Activated naive CD4-positive, alpha-beta T cell treated with anti-CD3 and anti-CD28 coated beads for 36 hours (primary cell): ENCODE measurements at regions of chr2 and their contacts with region 1.

Region 1: DNA sequence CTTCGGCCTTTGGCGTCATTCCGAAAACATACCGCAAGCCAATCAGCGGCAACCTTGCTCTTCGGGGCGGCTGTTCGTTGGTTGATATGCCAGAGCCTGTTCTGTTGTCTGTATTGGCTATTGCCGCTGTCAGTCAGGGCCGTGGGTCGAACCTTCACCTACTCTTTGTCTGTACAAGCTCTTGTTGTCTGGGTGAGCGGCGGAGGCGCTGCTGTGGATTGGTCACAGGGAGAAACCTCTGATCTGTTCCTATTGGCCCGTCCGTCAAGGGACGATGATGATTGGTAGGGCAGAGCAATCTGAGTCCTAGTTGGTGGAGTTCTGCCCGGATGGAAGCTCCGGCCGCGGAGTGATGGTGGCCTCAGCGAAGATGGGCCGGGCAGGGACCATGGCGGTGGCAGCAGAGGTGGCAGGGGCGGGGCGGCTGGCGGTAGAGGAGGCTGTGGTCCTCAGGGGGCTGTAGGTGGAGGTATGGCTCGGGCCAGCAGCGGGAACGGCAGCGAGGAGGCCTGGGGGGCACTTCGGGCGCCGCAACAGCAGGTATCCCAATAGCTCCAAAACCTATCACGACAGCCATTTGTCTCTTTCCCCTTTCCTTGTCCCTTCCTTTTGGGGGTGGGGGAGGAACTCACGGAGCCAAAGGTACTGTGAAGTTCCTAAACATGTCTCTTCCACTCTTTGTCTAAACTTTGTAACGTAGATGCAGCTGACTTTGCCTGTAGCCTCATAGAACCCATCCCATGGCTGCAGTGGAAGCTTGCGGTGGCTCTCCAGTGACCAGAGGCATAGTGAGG is at the start of gene WBP1:
- DNase-seq: peak; percentile 100
- H3K4me3 Mint-ChIP-seq: peak within 1 kb of the TSS; percentile 92
- H3K27ac Mint-ChIP-seq: peak within 1 kb of the TSS; percentile 99
- H3K4me1 Mint-ChIP-seq: peaks cover 43% of the 10 kb centered on the region
- H3K27me3 Mint-ChIP-seq: no peaks in the 10 kb centered on the region
- total RNA-seq, gene WBP1: 39.4 to 40.0 TPM

Region 2: DNA sequence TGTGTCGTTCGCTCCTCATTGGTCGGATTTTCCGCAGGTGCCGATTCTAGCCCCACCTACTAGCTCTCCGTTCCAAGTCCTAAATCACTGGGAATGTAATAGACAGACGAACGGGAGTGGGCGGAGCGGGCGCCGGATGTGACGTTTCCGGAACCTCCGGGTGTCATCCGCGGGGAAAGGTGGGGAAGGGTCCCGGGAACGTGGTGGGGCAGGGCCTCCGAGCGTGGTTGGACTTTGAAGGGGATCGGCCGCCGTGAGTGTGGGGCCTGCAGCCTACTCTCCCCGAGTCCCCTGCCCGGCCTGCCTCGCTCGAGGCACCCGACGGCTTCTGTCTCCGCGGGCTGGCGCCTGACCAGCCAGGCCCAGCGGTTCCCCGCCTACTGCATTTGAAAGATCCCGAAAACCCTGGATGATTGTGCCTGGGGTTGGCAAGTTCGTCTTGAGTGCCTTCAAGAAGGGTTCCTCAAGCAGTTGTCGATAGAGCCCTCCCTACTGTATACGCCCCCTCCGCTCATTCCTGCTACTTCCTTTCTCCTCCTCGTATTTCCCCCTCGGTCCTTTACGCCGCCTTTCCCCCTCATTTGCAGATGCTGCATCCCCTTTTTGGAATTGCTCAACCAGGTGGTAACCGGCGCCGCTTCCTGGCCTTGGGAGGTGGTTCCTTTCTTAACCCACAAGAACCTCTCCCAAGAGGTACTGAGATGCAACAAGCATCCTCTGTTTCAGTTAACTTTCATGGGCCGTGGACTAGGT is 629.3 kb before region 1 on chr2 and contains the start of gene STAMBP:
- CTCF ChIA-PET with region 1: no interaction called
- intact Hi-C with region 1: loop called (anchors 1 kb)
- DNase-seq: peak; percentile 96
- H3K4me3 Mint-ChIP-seq: peak within 1 kb of the TSS; percentile 94
- H3K27ac Mint-ChIP-seq: peak within 1 kb of the TSS; percentile 94
- H3K4me1 Mint-ChIP-seq: peaks cover 43% of the 10 kb centered on the region
- H3K27me3 Mint-ChIP-seq: no peaks in the 10 kb centered on the region
- total RNA-seq, gene STAMBP: 80.5 to 80.7 TPM

Region 3: DNA sequence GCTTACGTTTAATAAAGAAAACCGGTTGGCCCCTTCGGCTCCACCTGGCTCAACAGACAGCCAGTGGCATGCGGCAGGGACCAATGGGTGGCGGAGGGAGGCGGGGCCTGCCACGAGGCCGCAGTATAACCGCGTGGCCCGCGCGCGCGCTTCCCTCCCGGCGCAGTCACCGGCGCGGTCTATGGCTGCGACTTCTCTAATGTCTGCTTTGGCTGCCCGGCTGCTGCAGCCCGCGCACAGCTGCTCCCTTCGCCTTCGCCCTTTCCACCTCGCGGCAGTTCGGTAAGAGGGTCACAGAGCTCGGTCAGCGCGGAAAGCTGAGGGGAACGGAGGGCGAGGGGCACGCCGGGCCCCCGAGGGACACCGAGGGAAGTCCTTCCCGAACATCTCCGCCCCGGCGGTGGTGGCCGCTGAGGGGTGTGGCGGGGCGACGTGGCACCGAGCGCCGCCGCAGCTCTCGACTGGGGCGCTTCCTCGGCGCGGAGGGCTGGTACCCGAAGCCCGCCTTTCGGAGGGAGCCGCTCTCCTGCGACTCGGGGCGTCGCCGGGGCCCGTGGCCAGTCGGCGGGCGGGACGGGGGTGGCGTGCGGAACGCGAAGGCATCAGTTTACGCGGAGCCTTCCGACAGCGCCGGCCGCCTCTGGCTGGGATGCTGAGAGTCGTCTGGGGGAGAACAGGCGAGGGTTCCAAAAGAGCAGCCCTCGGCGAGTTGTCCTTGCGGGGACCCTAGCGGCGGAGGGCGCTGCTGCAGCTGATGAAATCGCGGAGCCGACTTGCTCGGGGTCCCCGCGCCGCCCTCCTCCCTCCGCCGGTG is 259.7 kb before region 1 on chr2 and contains the start of gene MTHFD2:
- CTCF ChIA-PET with region 1: no interaction called
- intact Hi-C with region 1: loop called (anchors 2 kb)
- DNase-seq: peak; percentile 95
- H3K4me3 Mint-ChIP-seq: peak within 1 kb of the TSS; percentile 97
- H3K27ac Mint-ChIP-seq: peak within 1 kb of the TSS; percentile 99
- H3K4me1 Mint-ChIP-seq: peaks cover 36% of the 10 kb centered on the region
- H3K27me3 Mint-ChIP-seq: no peaks in the 10 kb centered on the region
- total RNA-seq, gene MTHFD2: 683 to 692 TPM

Region 4: DNA sequence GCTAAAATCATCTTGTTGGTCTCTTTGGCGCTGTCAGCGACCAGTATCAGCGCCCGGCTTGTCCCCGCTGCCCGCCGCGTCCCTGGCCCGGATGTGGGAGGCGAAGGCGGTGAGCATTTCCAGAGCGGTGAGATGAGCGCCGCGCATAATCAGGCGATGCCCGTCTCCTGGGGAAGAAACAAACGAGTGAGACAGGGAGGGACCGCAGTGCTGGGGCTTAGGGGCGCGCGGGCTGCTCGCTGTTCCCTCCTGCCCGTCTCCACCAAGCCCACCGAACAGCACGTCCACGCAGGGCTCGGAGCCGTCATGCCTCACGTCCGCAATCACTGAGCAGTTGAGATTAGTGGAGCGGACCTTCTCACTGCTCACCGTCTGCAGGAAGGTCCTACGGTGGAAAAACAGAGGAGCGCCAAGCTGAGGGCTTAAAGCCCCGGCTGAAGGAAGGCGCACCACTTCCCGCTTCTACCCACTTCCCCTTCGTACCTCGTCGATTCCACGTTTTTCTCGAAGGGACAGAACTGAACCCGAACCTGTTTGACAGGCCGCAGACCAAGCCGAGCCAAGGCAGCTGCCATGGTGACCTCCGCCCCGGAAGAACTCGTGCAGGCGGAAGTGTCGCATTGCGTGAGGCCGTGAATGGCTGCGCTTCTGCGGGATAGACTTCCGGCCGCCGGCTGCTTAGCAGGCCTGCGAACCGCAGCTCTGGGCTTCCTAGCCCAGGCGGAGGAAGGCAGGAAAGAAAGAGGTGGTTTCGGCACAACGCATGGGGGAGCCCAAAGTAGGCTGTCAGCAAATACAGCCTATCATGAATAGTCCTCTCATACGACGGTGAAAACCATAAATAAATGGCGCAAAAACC is 14.0 kb after region 1 on chr2 and contains the start of gene MRPL53:
- CTCF ChIA-PET with region 1: interaction called, 5 read pairs
- intact Hi-C with region 1: loop called (anchors 1 kb)
- DNase-seq: peak; percentile 97
- H3K4me3 Mint-ChIP-seq: peak within 1 kb of the TSS; percentile 98
- H3K27ac Mint-ChIP-seq: peak within 1 kb of the TSS; percentile 98
- H3K4me1 Mint-ChIP-seq: peaks cover 20% of the 10 kb centered on the region
- H3K27me3 Mint-ChIP-seq: no peaks in the 10 kb centered on the region
- total RNA-seq, gene MRPL53: 112 to 117 TPM

Region 5: GRCh38 chr2:74553892-74554645 is 95.7 kb after region 1 on chr2 and contains the start of gene LOXL3:
- CTCF ChIA-PET with region 1: no interaction called
- intact Hi-C with region 1: loop called (anchors 1 kb)
- DNase-seq: peak; percentile 82
- H3K4me3 Mint-ChIP-seq: peak within 1 kb of the TSS; percentile 94
- H3K27ac Mint-ChIP-seq: peak within 1 kb of the TSS; percentile 88
- H3K4me1 Mint-ChIP-seq: peaks cover 4% of the 10 kb centered on the region
- H3K27me3 Mint-ChIP-seq: peaks cover 17% of the 10 kb centered on the region
- total RNA-seq, gene LOXL3: 0.35 to 0.41 TPM

Region 6: DNA sequence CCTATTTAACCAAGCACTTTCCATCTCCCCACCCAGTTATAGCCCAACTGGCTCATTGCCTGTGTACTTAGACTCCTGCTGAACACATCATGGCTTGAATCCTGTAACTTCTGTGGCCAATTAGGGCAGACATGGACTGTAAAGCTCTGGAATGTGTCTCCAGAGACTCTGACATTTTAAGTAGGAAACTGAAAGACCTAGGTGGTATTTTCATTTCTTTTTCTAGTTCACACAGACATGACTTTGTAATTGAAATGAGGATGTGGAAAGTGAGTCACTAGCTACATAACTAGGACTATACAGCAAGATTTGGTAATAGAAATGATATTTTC is 108.4 kb after region 1 on chr2:
- CTCF ChIA-PET with region 1: no interaction called
- intact Hi-C with region 1: no loop called
- DNase-seq: no peak
- H3K4me3 Mint-ChIP-seq: peak overlapping the region; percentile 31
- H3K27ac Mint-ChIP-seq: peak overlapping the region; percentile 87
- H3K4me1 Mint-ChIP-seq: peaks cover 35% of the 10 kb centered on the region
- H3K27me3 Mint-ChIP-seq: peaks cover 11% of the 10 kb centered on the region